Left lung (tissue), 14 donors: ENCODE measurements at regions of chr1 and their contacts with region 1.

Region 1: GRCh38 chr1:112466078-112466660 is 42.6 kb upstream of the WNT2B start:
- DNase-seq: peak; percentile 93 to 97 (median 95)
- ATAC-seq: peak; percentile 85
- H3K4me3 ChIP-seq: peak overlapping the region in 1 of 2 donors; percentile 14
- H3K27ac ChIP-seq: peak overlapping the region; percentile 64 to 74
- H3K4me1 ChIP-seq: peaks cover 13 to 22% of the 10 kb centered on the region in 2 donors
- H3K27me3 ChIP-seq: no peaks in the 10 kb centered on the region
- CTCF ChIP-seq: peak; percentile 72 to 88

Region 2: GRCh38 chr1:112395821-112396652 is 70.1 kb before region 1 on chr1 and contains the start of gene CTTNBP2NL:
- intact Hi-C with region 1: loop called (anchors 5 to 10 kb)
- DNase-seq: peak; percentile 95 to 99 (median 97)
- ATAC-seq: peak; percentile 93
- H3K4me3 ChIP-seq: peak within 1 kb of the TSS; percentile 77 to 100
- H3K27ac ChIP-seq: peak within 1 kb of the TSS; percentile 89 to 91
- H3K4me1 ChIP-seq: peaks cover 29 to 77% of the 10 kb centered on the region in 2 donors
- H3K27me3 ChIP-seq: peaks cover 0 to 6% of the 10 kb centered on the region in 2 donors
- CTCF ChIP-seq: no peak
- polyA plus RNA-seq, gene CTTNBP2NL: 34.6 to 40.8 (median 36.9) TPM